ENCODE measurements at regions of chr1 and their contacts with region 1.

Region 1: DNA sequence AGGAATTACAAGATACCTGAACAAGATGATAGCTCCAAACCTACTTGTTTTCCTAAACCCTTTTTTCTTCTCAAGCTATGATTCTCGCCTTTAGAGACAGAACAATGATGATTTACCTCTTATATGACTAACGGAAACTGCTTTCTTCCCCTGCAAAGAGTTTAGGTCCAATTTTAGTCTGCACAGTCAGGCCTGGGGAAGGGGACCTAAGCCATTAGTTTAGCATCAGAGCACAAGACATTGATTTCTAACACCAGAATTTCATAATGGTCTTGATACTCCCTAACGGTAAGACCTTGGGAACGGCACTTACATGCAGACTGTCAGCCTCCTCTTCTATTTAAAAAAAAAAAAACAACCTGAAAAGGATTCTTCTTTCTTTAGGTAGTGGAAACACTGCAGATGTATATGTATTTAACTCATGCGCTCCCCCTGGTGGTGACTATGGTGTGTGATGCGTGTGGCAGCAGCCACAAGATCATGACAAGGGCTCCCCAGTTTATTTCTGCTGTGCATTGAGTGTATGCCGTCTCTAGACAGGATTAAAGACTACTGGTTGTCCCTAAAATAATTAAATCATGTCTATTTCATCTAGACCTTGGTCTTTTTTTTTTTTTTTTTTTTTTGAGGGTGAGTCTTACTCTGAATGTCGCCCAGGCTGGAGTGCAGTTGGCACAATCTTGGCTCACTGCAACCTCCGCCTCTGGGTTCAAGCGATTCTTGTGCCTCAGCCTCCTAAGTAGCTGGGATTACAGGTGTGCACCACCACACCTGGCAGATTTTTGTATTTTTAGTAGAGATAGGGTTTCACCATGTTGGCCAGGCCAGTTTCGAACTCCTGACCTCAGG is 37.3 kb upstream of the TMEM222 start:
- DNase-seq: peak; percentile 90
- H3K4me3 Mint-ChIP-seq: no peak overlapping the region
- H3K27ac Mint-ChIP-seq: no peak overlapping the region
- H3K4me1 Mint-ChIP-seq: no peaks in the 10 kb centered on the region
- H3K27me3 Mint-ChIP-seq: no peaks in the 10 kb centered on the region

Region 2: DNA sequence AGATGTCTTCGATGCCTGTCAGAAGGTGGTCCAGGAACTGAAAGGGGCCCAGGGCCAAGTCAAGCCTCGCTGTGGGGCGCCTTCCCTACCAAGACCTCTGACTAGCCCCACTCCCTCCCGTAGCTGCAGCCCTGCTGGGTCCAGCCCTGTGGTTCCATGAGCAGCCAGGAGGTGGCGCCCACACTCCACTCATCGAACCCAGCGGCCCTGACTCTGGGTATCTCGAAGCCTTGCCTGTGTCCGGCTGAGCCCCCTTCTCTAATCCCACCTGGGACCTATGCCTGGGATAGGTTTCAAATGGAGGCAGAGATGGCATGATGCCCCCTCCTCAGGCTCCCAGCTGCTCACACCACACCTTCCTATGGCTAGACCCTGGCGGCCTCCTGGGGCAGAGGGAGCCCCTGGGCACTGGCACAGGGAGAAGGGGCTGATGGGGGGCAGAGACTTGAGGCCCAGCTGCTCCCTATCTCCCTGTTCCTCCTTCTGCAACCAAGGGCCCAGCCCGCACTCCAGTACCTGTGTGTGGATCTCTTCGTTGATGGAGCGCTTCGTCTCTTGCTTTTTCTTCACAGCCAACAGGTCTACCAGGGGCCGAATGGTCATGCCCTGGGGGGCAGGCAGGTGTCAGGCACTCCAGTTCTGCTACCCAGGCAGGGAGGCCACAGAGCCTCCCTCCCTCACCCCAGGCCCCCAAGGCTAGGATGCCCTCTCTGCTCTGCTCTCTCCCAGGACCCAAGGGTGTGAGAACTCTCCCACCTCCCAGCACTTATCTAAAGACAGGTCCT is 181.8 kb before region 1 on chr1:
- CTCF ChIA-PET with region 1: interaction called, 69 read pairs
- POLR2A ChIA-PET with region 1: no interaction called
- intact Hi-C with region 1: loop called (anchors 1 kb)
- DNase-seq: peak; percentile 87
- H3K4me3 Mint-ChIP-seq: no peak overlapping the region
- H3K27ac Mint-ChIP-seq: no peak overlapping the region
- H3K4me1 Mint-ChIP-seq: peaks cover 15% of the 10 kb centered on the region
- H3K27me3 Mint-ChIP-seq: no peaks in the 10 kb centered on the region

Region 3: DNA sequence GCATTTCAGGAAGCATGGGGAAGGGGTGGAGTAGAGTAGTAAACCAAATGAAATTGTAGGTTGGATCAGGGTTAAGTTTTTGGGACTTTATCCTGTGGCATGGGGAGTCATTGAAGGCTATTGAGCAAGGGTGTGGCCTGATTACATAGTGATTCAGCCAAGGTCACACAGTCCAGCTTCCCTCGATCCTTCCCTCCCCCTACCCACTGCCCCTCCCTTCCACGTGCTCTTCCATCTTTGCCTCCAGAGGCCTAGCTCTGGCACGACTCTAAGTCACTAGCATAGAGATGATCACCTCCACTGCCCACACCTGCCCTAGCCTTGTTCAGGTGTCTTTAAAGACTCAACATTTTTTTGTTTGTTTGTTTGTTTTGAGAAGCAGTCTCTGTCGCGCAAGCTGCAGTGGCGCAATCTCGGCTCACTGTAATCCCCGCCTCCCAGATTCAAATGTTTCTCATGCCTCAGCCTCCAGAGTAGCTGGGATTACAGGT is 92.6 kb before region 1 on chr1:
- CTCF ChIA-PET with region 1: interaction called, 62 read pairs
- POLR2A ChIA-PET with region 1: no interaction called
- intact Hi-C with region 1: no loop called
- DNase-seq: no peak
- H3K4me3 Mint-ChIP-seq: no peak overlapping the region
- H3K27ac Mint-ChIP-seq: no peak overlapping the region
- H3K4me1 Mint-ChIP-seq: no peaks in the 10 kb centered on the region
- H3K27me3 Mint-ChIP-seq: no peaks in the 10 kb centered on the region

Region 4: DNA sequence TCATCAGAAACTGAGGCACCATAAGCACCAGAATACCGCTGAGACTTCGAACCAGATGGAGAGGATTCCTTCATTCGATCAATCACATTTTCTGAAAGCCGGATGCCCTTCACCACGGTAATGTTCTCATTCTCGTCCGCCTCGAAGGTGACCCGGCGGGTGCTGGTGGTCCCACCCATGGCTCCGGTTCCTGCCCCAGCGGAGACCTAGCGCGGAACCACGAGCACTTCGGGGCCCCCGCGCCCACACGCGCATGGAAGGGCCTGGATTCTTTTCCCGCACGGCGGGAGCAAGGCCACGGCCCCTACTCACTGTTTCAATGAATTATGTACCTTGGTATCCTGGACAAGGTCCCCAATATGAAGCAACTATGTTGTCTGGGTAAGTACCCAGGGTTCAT is 83.4 kb before region 1 on chr1:
- CTCF ChIA-PET with region 1: interaction called, 62 read pairs
- POLR2A ChIA-PET with region 1: no interaction called
- intact Hi-C with region 1: loop called (anchors 1 kb)
- DNase-seq: no peak
- H3K4me3 Mint-ChIP-seq: no peak overlapping the region
- H3K27ac Mint-ChIP-seq: no peak overlapping the region
- H3K4me1 Mint-ChIP-seq: peaks cover 4% of the 10 kb centered on the region
- H3K27me3 Mint-ChIP-seq: no peaks in the 10 kb centered on the region

Measured in activated CD4-positive, alpha-beta memory T cell treated with anti-CD3 and anti-CD28 coated beads for 36 hours (primary cell).